ENCODE measurements at regions of chr1 and their contacts with region 1.

Region 1: GRCh38 chr1:7902478-7903085 is 38.1 kb downstream of the TNFRSF9 start:
- DNase-seq: peak in 2 of 3 donors; percentile 60 to 82
- ATAC-seq: peak; percentile 96
- H3K4me3 ChIP-seq: no peak overlapping the region
- H3K4me1 ChIP-seq: no peaks in the 10 kb centered on the region
- CTCF ChIP-seq: peak; percentile 14

Region 2: GRCh38 chr1:7667625-7668218 is 234.9 kb before region 1 on chr1:
- intact Hi-C with region 1: loop called in 1 of 2 experiments (anchors 10 kb)
- DNase-seq: peak; percentile 84 to 96 (median 93)
- ATAC-seq: peak; percentile 92
- H3K4me3 ChIP-seq: no peak overlapping the region
- H3K4me1 ChIP-seq: no peaks in the 10 kb centered on the region
- CTCF ChIP-seq: peak; percentile 100

Measured in mucosa of descending colon (tissue), 3 donors.